CD4-positive, alpha-beta T cell (primary cell): ENCODE measurements at regions of chr1 and their contacts with region 1.

Region 1: DNA sequence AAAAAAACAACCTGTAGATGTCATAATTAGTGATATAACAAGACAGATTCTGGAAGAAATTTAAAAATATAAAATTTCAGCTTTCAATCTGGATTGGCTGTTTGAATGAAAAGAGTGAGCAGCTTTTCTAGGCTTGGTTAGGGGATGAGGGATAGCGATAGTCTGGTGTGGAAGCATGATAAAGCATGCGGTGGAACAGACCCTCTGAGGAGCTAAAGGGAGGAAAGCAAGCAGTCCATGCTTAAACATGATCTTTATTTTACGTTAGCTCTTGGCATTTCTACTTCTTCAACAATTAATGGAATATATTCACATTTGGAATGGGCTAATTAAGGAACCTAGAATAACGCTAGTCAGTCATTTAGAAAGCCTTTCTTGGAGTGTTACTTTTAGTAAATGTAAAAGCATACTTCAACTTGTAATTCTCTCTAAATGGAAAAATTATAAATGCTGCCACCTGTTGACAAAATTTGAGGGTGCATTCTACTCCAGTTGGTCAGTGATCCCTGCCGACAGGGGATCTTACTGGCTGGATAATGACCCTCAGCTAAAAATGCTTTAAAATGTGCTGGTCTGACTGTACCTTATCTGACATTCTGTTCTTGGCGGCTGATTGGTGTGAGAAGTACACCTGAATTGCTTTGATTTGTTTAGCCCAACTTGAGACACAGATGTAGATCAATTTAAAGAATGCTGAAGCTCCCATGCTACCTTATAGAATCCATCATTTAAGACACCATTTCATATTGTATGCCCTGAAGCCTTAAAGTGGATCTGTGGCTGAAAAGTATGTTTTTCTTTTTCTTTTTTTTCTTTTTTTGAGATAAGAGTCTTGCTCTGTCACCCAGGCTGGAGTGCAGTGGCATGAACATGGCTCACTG is 61.2 kb downstream of the AK4 start:
- DNase-seq: peak in 4 of 14 experiments; percentile 6 to 34 (median 26)
- ATAC-seq: no peak
- H3K4me3 ChIP-seq: no peak overlapping the region
- H3K4me3 Mint-ChIP-seq: no peak overlapping the region
- H3K27ac ChIP-seq: no peak overlapping the region
- H3K27ac Mint-ChIP-seq: no peak overlapping the region
- H3K4me1 ChIP-seq: no peaks in the 10 kb centered on the region
- H3K4me1 Mint-ChIP-seq: no peaks in the 10 kb centered on the region
- H3K27me3 ChIP-seq: no peaks in the 10 kb centered on the region
- H3K27me3 Mint-ChIP-seq: peaks cover 4% of the 10 kb centered on the region
- CTCF ChIP-seq: peak; percentile 55

Region 2: DNA sequence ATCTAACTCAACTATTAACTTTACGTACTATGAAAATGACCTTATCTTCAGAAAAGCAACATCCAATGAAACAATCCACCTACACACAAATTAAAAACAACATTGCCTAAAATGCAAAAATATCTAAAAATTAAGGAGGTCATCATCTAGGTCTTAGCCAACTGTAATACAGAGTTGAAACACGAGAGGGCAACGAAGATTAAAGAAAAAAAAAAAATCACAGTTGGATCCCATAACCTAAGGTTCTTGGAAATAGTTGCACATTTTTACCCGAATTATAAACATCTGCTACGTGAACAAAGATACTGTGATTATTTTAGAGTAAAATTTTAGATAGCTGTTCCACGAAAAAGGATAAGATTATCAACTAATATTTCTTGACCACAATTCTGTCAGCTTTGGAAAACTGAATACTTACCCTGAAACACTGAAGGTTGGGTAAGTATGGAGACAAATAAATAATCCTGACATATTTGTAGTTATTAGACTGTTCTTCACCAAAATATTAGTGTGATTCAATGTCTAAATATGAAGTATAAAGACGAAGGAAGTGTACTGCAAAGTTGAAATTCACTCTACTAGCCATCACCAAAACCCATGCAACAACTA is 149.2 kb before region 1 on chr1:
- CTCF ChIA-PET with region 1: no interaction called
- POLR2A ChIA-PET with region 1: no interaction called
- intact Hi-C with region 1: loop called (anchors 1 to 5 kb)
- DNase-seq: peak in 3 of 14 experiments; percentile 40 to 62 (median 61)
- ATAC-seq: peak; percentile 60
- H3K4me3 ChIP-seq: no peak overlapping the region
- H3K4me3 Mint-ChIP-seq: peak overlapping the region; percentile 1
- H3K27ac ChIP-seq: no peak overlapping the region
- H3K27ac Mint-ChIP-seq: peak overlapping the region; percentile 70
- H3K4me1 ChIP-seq: peaks cover 11% of the 10 kb centered on the region
- H3K4me1 Mint-ChIP-seq: peaks cover 63% of the 10 kb centered on the region
- H3K27me3 ChIP-seq: no peaks in the 10 kb centered on the region
- H3K27me3 Mint-ChIP-seq: no peaks in the 10 kb centered on the region
- CTCF ChIP-seq: peak; percentile 69

Region 3: DNA sequence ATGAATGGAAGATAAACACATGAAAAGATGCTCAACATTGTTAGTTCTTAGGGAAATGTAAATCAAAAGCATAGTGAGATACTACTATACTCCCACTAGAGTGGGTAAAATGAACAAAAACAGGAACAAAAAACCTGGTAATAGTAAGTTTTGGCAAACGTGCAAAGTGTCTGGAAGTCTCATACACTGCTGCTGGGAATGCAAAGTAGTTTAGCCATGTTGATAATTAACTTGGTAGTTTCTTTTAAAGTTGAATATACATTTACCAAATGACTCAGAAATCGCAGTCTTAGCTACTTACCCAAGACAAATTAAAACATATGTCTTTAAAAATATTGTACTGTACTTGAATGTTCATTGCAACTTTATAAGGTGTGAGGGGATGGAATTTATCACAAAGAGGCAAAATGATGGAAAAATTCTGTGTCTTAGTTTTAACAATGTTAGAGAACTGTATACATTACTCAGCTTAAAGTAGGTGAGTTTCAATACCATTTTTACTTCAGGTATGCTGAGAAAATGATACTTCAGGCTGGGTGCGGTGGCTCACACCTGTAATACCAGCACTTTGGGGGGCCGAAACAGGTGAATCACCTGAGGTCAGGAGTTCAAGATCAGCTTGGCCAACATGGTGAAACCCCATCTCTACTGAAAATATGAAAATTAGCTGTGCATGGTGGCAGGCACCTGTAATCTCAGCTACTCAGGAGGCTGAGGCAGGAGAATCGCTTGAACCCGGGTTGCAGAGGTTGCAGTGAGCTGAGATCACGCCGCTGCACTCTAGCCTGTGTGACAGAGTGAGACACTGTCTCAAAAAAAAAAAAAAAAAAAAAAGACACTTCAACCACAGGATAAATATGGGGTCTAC is 685.7 kb after region 1 on chr1:
- CTCF ChIA-PET with region 1: no interaction called
- POLR2A ChIA-PET with region 1: no interaction called
- intact Hi-C with region 1: no loop called
- DNase-seq: no peak
- ATAC-seq: no peak
- H3K4me3 ChIP-seq: no peak overlapping the region
- H3K4me3 Mint-ChIP-seq: no peak overlapping the region
- H3K27ac ChIP-seq: no peak overlapping the region
- H3K27ac Mint-ChIP-seq: no peak overlapping the region
- H3K4me1 ChIP-seq: no peaks in the 10 kb centered on the region
- H3K4me1 Mint-ChIP-seq: no peaks in the 10 kb centered on the region
- H3K27me3 ChIP-seq: no peaks in the 10 kb centered on the region
- H3K27me3 Mint-ChIP-seq: peaks cover 17% of the 10 kb centered on the region
- CTCF ChIP-seq: no peak